Left cardiac atrium (tissue), 4 donors: ENCODE measurements at regions of chrX and their contacts with region 1.

Region 1: GRCh38 chrX:28847423-28847822 is 260.2 kb downstream of the IL1RAPL1 start:
- DNase-seq: peak; percentile 32
- ATAC-seq: peak in 1 of 2 donors; percentile 96

Region 2: DNA sequence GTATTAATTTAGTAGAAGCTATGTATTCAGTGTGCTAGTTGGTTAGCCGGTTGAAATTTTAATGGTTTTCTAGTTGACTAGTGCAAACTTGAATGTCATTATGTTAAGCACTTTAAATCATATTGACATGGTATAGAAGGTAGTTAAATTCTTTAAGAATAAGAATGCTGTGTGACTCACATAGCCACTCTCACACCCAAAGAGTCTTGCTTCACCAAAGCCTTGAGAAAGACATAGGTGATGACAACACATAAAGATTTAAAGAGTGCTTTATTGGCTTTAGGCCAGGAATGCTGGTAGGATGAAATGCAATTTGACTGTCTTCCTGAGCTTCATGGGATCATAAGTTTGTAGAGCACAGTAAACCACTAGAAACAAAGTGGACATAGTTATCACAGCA is 1171.9 kb before region 1 on chrX:
- intact Hi-C with region 1: no loop called
- DNase-seq: no peak
- ATAC-seq: no peak

Region 3: DNA sequence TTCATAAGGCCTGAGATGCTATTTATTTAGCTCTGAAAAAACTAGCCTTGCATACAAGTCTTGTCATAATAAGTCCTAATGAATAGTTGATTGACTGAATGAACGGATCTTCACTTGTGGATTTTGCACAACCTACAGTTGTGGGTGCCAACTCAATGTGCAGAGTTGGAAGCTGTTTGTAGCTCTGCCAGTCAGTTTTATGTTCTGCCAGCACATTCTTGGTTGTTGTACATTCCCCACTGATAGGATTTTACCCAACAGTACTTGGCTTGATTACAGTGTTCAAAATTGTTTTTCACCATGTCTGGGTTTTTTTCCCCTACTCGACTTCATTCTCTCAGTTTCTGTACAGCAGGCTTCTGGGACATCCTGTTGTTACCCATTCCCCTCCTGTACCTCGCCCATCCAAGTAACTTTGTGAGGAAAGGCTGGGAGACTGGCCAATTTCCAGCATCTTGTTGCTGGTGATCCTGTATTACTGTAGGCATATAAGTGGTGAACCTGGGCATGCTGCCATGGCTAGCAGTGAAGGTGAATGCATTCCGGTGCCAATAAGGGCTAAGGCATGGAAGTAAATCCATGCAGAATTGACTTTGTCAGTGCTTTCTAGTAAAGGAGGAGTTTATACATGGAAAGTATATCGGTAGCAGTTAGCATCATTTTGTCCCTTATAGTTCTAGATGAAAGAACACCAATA is 237.4 kb before region 1 on chrX:
- intact Hi-C with region 1: loop called in 1 of 2 experiments (anchors 5 kb)
- DNase-seq: peak; percentile 44
- ATAC-seq: peak in 1 of 2 donors; percentile 60